B cell (primary cell): ENCODE measurements at regions of chr3 and their contacts with region 1.

Region 1: GRCh38 chr3:127628788-127629466 is at the start of gene PODXL2:
- DNase-seq: peak; percentile 64
- ATAC-seq: peak; percentile 59
- H3K4me3 ChIP-seq: peak within 1 kb of the TSS; percentile 2 to 72 (median 46)
- H3K4me3 Mint-ChIP-seq: peak within 1 kb of the TSS; percentile 94
- H3K27ac ChIP-seq: no peak within 1 kb of the TSS
- H3K27ac Mint-ChIP-seq: peak within 1 kb of the TSS; percentile 79
- H3K4me1 ChIP-seq: peaks cover 14 to 17% of the 10 kb centered on the region in 2 donors
- H3K4me1 Mint-ChIP-seq: peaks cover 27% of the 10 kb centered on the region
- H3K27me3 ChIP-seq: peaks cover 0 to 24% (median 13%) of the 10 kb centered on the region in 4 experiments
- H3K27me3 Mint-ChIP-seq: peaks cover 24% of the 10 kb centered on the region
- CTCF ChIP-seq: no peak
- total RNA-seq, gene PODXL2: 3.6 and 4.0 TPM in 2 replicates

Region 2: GRCh38 chr3:127672516-127673190 is 43.7 kb after region 1 on chr3 and contains the start of gene ABTB1:
- CTCF ChIA-PET with region 1: no interaction called
- POLR2A ChIA-PET with region 1: no interaction called
- intact Hi-C with region 1: loop called (anchors 2 kb)
- DNase-seq: peak; percentile 88
- ATAC-seq: peak; percentile 87
- H3K4me3 ChIP-seq: peak within 1 kb of the TSS; percentile 41 to 87 (median 79)
- H3K4me3 Mint-ChIP-seq: peak within 1 kb of the TSS; percentile 94
- H3K27ac ChIP-seq: peak within 1 kb of the TSS; percentile 83 to 96
- H3K27ac Mint-ChIP-seq: peak within 1 kb of the TSS; percentile 98
- H3K4me1 ChIP-seq: peaks cover 16 to 22% of the 10 kb centered on the region in 2 donors
- H3K4me1 Mint-ChIP-seq: peaks cover 29% of the 10 kb centered on the region
- H3K27me3 ChIP-seq: no peaks in the 10 kb centered on the region
- H3K27me3 Mint-ChIP-seq: no peaks in the 10 kb centered on the region
- CTCF ChIP-seq: no peak
- total RNA-seq, gene ABTB1: 132 and 141 TPM in 2 replicates

Region 3: DNA sequence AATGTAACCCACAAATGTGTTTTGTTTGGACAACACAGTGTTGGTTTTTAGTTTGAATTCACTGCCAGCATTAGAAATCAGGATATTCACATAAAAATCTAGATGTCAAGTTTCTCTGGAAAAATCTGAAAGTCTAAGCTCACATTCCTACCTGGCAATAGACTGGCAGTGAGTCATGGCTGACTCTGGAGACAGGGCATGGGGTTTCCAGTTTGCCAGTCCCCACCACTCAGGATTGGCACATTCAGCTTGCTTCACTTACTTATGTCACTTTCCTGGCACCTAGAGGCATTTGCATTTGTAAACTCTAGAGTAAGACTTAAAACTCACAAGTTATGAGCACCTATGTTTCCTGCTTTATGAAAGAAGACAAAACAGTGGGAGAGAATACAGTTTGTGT is 404.2 kb after region 1 on chr3:
- CTCF ChIA-PET with region 1: no interaction called
- POLR2A ChIA-PET with region 1: no interaction called
- intact Hi-C with region 1: no loop called
- DNase-seq: no peak
- ATAC-seq: no peak
- H3K4me3 ChIP-seq: no peak overlapping the region
- H3K4me3 Mint-ChIP-seq: no peak overlapping the region
- H3K27ac ChIP-seq: no peak overlapping the region
- H3K27ac Mint-ChIP-seq: no peak overlapping the region
- H3K4me1 ChIP-seq: no peaks in the 10 kb centered on the region
- H3K4me1 Mint-ChIP-seq: no peaks in the 10 kb centered on the region
- H3K27me3 ChIP-seq: peaks cover 0 to 10% (median 3%) of the 10 kb centered on the region in 4 experiments
- H3K27me3 Mint-ChIP-seq: peaks cover 17% of the 10 kb centered on the region
- CTCF ChIP-seq: no peak